ENCODE measurements at regions of chr2 and their contacts with region 1.

Region 1: DNA sequence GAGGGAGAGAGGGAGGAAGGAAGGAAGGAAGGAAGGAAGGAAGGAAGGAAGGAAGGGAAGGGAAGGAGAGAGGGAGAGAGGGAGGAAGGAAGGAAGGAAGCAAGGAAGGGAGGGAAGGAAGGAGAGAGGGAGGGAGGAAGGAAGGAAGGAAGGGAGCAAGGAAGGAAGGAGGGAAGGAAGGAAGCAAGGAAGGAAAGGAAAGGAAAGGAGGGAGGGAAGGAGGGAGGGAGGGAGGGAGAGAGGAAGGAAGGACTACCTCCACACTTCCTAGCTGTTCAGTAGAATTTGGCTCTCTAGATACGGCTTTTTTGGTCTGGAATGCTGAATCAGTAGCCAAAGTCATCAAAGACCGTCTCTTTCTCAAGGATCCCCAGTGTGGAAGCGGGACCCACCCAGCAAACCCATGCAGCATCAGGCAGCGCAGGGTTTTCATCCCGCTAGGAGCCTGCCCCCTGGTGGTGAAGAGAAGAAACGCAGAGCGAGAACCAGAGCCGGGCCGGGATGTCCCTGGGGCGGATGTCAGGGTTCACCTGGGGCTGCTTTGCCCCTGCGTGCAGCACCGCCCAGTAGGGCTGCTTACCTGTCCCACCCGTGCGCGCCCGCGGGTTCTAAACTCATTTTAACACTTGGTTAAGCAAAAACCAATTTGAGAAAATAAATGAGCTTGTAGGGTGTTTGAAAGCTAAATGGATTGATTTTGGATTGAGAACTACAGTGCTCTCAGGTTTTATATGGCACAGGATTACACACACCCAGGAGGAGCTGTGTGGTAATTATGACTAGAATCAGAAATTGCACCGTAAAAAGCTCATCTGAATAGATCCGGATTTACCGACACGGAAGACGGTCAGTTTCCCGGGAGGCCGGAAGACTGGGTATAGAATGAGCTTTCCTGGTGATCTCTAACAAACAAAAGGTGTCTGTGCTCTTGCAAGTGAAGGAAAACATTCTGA is 48.1 kb upstream of the ARL4C start:
- DNase-seq: peak; percentile 68
- H3K4me3 Mint-ChIP-seq: no peak overlapping the region
- H3K27ac Mint-ChIP-seq: no peak overlapping the region
- H3K4me1 Mint-ChIP-seq: no peaks in the 10 kb centered on the region
- H3K27me3 Mint-ChIP-seq: no peaks in the 10 kb centered on the region
- CTCF ChIP-seq: peak; percentile 87

Region 2: DNA sequence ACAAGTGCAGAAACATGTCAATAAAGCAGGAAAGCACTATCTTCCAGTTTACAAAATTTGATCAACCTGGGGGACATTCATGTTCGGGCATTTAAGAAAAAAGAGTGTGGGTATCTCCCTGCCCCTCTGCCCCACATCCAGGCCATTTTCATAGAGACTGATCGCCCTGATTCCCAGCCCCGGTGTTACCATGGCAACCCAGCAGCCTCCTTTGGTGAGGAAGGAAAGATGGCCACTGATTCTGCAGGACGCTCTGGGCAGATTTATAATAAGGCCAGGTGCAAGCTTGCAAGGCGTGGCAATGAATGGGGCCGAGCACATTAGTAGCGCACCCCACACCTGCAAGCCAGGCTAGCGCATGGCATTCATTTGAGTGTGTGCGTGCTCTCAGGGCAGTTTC is 11.3 kb before region 1 on chr2:
- CTCF ChIA-PET with region 1: interaction called, 32 read pairs
- POLR2A ChIA-PET with region 1: no interaction called
- intact Hi-C with region 1: no loop called
- DNase-seq: no peak
- H3K4me3 Mint-ChIP-seq: no peak overlapping the region
- H3K27ac Mint-ChIP-seq: no peak overlapping the region
- H3K4me1 Mint-ChIP-seq: no peaks in the 10 kb centered on the region
- H3K27me3 Mint-ChIP-seq: no peaks in the 10 kb centered on the region
- CTCF ChIP-seq: no peak

Region 3: DNA sequence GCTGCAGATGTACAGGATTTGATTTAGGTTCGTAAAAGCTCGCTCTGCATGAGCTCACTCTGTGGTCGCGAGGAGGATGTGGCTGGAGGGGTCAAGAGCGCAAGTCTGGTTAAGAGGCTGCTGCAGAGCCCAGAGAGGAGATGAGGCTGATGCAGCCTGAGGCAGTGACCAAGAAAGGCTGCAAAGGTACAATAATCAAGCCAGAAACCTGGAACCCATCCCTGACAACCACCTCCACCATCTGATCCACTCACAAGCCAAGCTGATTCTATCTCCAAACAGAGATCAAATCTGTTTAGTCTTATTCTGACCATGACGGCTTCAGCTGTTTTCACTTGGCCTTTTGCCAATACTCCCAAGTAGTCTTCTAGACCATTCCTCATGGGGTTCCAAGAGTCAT is 10.8 kb after region 1 on chr2:
- CTCF ChIA-PET with region 1: interaction called, 16 read pairs
- POLR2A ChIA-PET with region 1: no interaction called
- intact Hi-C with region 1: no loop called
- DNase-seq: no peak
- H3K4me3 Mint-ChIP-seq: no peak overlapping the region
- H3K27ac Mint-ChIP-seq: no peak overlapping the region
- H3K4me1 Mint-ChIP-seq: no peaks in the 10 kb centered on the region
- H3K27me3 Mint-ChIP-seq: no peaks in the 10 kb centered on the region
- CTCF ChIP-seq: no peak

Measured in MCF 10A (cell line).